ENCODE measurements at regions of chrX and their contacts with region 1.

Region 1: DNA sequence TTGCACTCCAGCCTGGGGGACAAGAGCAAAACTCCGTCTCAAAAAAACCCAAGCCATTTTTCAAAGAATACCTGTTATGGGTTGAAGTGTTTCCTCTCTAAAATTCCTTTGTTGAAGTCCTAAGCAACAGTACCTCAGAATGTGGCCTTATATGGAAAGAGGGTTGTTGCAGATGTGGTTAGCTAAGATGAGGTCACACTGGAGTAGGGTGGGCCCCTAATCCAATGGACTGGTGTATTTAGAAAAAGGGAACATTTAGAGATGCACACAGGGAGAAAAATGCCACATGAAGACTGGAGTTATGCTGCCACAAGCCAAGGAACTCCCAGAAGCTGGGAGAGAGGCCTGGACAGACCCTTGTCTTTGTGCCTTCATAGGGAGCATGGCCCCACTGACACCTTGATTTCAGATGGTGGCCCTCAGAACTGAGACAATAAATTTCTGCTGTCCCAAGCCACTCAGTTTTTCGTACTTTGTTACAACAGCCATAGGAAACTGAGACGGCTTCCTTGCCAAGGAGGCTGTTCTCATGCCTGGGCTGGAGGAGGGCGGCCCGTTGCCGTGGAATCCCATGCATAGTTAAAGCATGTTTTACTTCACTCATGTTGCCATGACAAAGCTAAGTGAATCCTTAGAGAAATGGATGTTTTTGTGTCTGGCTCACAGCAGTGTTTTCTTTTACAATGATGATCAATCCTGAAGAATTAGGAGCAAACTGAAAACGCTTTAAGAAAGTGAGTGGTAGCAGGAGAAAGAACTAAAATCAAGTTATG is 16.5 kb downstream of the TRAPPC2 start:
- DNase-seq: no peak
- ATAC-seq: no peak
- H3K4me3 ChIP-seq: no peak overlapping the region
- H3K4me3 Mint-ChIP-seq: peak overlapping the region; percentile 81
- H3K27ac ChIP-seq: peak overlapping the region; percentile 81
- H3K27ac Mint-ChIP-seq: peak overlapping the region; percentile 92 to 94
- H3K4me1 ChIP-seq: peaks cover 41% of the 10 kb centered on the region
- H3K4me1 Mint-ChIP-seq: peaks cover 49 to 64% of the 10 kb centered on the region in 2 donors
- H3K27me3 ChIP-seq: no peaks in the 10 kb centered on the region
- H3K27me3 Mint-ChIP-seq: no peaks in the 10 kb centered on the region
- CTCF ChIP-seq: no peak

Region 2: DNA sequence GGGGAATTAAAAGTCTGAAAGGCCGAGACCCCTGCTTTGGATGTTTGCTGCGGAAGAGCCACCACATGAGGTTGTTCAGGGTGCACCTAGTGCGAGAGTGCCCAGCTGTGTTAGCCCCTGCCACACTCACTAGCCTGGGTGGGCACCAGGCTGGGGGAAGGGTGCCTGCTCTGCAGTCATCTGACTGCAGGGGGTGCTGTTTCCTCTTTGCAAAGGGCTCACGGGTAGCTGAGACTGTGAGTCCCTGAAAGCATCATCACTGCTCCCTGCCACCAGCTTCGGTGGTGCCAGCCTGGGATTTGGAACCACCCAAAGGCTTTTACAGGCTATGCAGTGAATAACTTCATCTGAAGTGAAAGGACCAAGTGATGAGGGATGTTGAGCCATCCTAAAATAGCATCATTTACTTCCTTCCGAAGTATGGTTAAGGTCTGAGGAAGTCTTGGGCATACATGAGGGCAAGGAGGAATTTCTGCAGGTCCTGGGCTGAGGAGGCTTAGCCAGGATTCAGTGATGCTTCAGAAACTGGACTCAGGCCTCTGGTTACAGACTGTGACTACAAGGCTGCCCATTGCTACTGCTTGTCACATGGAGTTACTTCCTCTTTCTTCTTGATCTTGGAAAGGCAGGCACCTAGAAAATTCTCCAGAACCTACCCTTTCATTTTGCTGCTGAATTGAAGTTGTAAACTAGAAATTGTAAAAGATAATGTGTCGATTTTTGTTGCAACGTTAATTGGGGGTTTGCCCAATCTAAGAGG is 1219.9 kb before region 1 on chrX:
- intact Hi-C with region 1: no loop called
- DNase-seq: no peak
- ATAC-seq: no peak
- H3K4me3 ChIP-seq: no peak overlapping the region
- H3K4me3 Mint-ChIP-seq: no peak overlapping the region
- H3K27ac ChIP-seq: no peak overlapping the region
- H3K27ac Mint-ChIP-seq: no peak overlapping the region
- H3K4me1 ChIP-seq: no peaks in the 10 kb centered on the region
- H3K4me1 Mint-ChIP-seq: no peaks in the 10 kb centered on the region
- H3K27me3 ChIP-seq: no peaks in the 10 kb centered on the region
- H3K27me3 Mint-ChIP-seq: no peaks in the 10 kb centered on the region
- CTCF ChIP-seq: no peak

Region 3: GRCh38 chrX:13387666-13388494 is 330.0 kb before region 1 on chrX:
- intact Hi-C with region 1: no loop called
- DNase-seq: no peak
- ATAC-seq: peak; percentile 74 to 89 (median 86)
- H3K4me3 ChIP-seq: no peak overlapping the region
- H3K4me3 Mint-ChIP-seq: peak overlapping the region; percentile 33
- H3K27ac ChIP-seq: peak overlapping the region; percentile 2
- H3K27ac Mint-ChIP-seq: peak overlapping the region; percentile 78 to 86
- H3K4me1 ChIP-seq: no peaks in the 10 kb centered on the region
- H3K4me1 Mint-ChIP-seq: peaks cover 21 to 34% of the 10 kb centered on the region in 2 donors
- H3K27me3 ChIP-seq: no peaks in the 10 kb centered on the region
- H3K27me3 Mint-ChIP-seq: no peaks in the 10 kb centered on the region
- CTCF ChIP-seq: no peak

Region 4: DNA sequence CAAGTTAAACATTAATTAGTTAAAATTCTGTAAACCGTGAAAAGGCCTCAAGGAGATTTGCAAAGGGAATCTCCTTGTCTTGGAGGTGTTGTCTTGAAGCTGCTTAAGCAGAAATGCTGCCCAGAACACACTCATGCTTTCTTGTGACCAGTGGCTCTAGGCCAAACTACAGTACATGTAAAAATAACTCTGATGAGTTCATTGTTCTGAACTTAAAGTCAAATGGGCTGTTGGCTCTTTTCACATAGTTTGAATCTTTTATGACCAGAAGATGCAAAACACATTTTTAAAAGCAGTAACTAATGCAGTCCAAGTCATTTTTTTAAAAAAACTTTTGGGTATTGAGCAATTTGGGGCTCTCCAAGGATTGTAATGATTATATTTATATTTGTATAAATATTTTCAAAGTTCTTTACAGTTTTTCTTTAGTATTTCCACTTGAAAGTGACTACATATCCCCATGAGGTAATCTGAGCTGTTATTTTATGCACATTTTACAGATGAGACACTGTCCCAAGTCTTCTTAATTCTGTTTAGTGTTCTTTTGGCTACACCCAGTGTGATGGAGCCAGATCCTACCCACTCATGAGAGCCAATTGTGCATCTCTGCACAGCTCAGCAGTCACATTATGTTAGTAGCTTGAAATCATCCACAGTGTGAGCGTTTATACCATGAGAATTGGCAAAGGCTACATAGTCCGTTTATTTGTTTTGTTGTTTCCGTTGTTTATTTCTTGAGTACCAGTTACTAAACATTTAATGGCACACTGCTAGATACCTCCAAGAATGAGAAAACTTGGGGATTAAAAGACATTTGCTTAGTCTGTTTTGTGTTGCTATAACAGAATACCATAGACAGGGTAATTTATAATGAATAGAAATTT is 285.2 kb before region 1 on chrX:
- intact Hi-C with region 1: no loop called
- DNase-seq: no peak
- ATAC-seq: no peak
- H3K4me3 ChIP-seq: no peak overlapping the region
- H3K4me3 Mint-ChIP-seq: no peak overlapping the region
- H3K27ac ChIP-seq: no peak overlapping the region
- H3K27ac Mint-ChIP-seq: no peak overlapping the region
- H3K4me1 ChIP-seq: peaks cover 8% of the 10 kb centered on the region
- H3K4me1 Mint-ChIP-seq: peaks cover 15 to 18% of the 10 kb centered on the region in 2 donors
- H3K27me3 ChIP-seq: no peaks in the 10 kb centered on the region
- H3K27me3 Mint-ChIP-seq: peaks cover 0 to 14% of the 10 kb centered on the region in 2 donors
- CTCF ChIP-seq: no peak

Region 5: GRCh38 chrX:13699183-13699826 is 18.6 kb before region 1 on chrX:
- intact Hi-C with region 1: loop called (anchors 2 kb)
- DNase-seq: peak in 1 of 2 donors; percentile 18
- ATAC-seq: peak; percentile 59 to 75 (median 71)
- H3K4me3 ChIP-seq: no peak overlapping the region
- H3K4me3 Mint-ChIP-seq: peak overlapping the region; percentile 6
- H3K27ac ChIP-seq: peak overlapping the region; percentile 67
- H3K27ac Mint-ChIP-seq: peak overlapping the region; percentile 71 to 88
- H3K4me1 ChIP-seq: peaks cover 57% of the 10 kb centered on the region
- H3K4me1 Mint-ChIP-seq: peaks cover 71 to 73% of the 10 kb centered on the region in 2 donors
- H3K27me3 ChIP-seq: no peaks in the 10 kb centered on the region
- H3K27me3 Mint-ChIP-seq: no peaks in the 10 kb centered on the region
- CTCF ChIP-seq: no peak

Region 6: GRCh38 chrX:13734278-13735172 is 16.6 kb after region 1 on chrX and contains the starts of genes OFD1 and TRAPPC2:
- intact Hi-C with region 1: loop called (anchors 1 kb)
- DNase-seq: peak; percentile 83 to 95
- ATAC-seq: peak; percentile 90 to 98 (median 92)
- H3K4me3 ChIP-seq: peak within 1 kb of the TSS; percentile 96
- H3K4me3 Mint-ChIP-seq: peak within 1 kb of the TSS; percentile 99
- H3K27ac ChIP-seq: peak within 1 kb of the TSS; percentile 86
- H3K27ac Mint-ChIP-seq: peak within 1 kb of the TSS; percentile 87 to 98
- H3K4me1 ChIP-seq: peaks cover 14% of the 10 kb centered on the region
- H3K4me1 Mint-ChIP-seq: peaks cover 37 to 61% of the 10 kb centered on the region in 2 donors
- H3K27me3 ChIP-seq: no peaks in the 10 kb centered on the region
- H3K27me3 Mint-ChIP-seq: no peaks in the 10 kb centered on the region
- CTCF ChIP-seq: no peak
- total RNA-seq, gene OFD1: 62.8 to 77.6 (median 74.9) TPM
- total RNA-seq, gene TRAPPC2: 24.2 to 63.3 (median 42.4) TPM

Region 7: DNA sequence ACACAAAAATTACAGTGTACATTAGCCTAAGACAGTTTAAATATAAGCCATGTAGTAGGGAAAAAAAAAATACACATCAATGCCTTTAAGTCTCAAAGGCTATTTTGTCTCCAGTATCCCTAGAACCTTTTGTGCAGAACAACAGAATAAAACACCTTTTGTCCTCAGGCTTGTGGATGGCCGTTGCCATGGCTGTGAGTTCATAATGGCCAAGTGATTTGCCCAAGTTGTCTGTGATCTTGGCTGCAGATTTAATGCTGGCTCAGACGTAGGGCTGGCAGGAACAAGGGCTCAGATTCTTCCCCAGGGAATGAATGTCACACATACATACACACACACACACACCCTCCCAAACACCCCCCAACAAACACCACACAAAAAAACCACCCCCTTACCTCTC is 73.7 kb after region 1 on chrX:
- intact Hi-C with region 1: no loop called
- DNase-seq: no peak
- ATAC-seq: no peak
- H3K4me3 ChIP-seq: no peak overlapping the region
- H3K4me3 Mint-ChIP-seq: no peak overlapping the region
- H3K27ac ChIP-seq: no peak overlapping the region
- H3K27ac Mint-ChIP-seq: no peak overlapping the region
- H3K4me1 ChIP-seq: no peaks in the 10 kb centered on the region
- H3K4me1 Mint-ChIP-seq: no peaks in the 10 kb centered on the region
- H3K27me3 ChIP-seq: no peaks in the 10 kb centered on the region
- H3K27me3 Mint-ChIP-seq: no peaks in the 10 kb centered on the region
- CTCF ChIP-seq: no peak

Measured in natural killer cell (primary cell).